Stomach (tissue), 19 donors: ENCODE measurements at regions of chr2 and their contacts with region 1.

Region 1: GRCh38 chr2:199488772-199489400 is 31.1 kb upstream of the SATB2 start:
- DNase-seq: peak; percentile 57 to 71
- H3K4me3 ChIP-seq: no peak overlapping the region
- H3K27ac ChIP-seq: no peak overlapping the region
- H3K4me1 ChIP-seq: no peaks in the 10 kb centered on the region
- H3K27me3 ChIP-seq: peaks cover 0 to 23% (median 11%) of the 10 kb centered on the region in 3 donors
- CTCF ChIP-seq: peak in 5 of 7 experiments; percentile 4 to 50 (median 47)
- EP300 ChIP-seq: no peak
- POLR2A ChIP-seq: no peak

Region 2: DNA sequence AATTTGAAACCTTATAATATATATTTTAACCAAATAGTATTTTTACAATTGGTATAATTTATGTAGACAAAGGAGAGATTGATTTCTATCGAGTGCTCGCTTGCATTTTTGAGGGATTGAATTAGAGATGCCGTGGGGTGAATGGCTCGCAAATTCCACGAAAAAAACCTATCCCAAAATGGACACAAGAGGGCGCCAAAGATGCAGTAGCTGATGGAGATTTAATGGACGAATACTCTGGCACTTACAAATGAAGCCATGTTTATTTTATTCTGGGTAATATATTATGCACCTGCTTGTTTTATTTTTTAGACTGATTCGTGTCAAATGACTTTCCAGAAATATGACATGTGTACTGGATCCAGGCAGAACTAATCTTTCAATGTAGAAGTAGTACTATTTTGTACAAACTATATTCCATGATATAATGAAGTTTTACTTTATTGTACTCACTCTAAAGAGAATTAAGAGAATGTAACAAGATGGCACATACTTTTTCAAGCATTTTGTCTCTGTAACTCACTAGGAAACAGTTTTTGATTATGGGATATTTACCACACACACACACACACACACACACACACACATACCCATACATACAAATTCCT is 1179.1 kb before region 1 on chr2:
- intact Hi-C with region 1: loop called (anchors 10 kb)
- DNase-seq: peak; percentile 40 to 78
- H3K4me3 ChIP-seq: no peak overlapping the region
- H3K27ac ChIP-seq: no peak overlapping the region
- H3K4me1 ChIP-seq: peaks cover 0 to 7% (median 0%) of the 10 kb centered on the region in 4 donors
- H3K27me3 ChIP-seq: peaks cover 0 to 22% (median 8%) of the 10 kb centered on the region in 3 donors
- CTCF ChIP-seq: peak in 4 of 7 experiments; percentile 49 to 87 (median 67)
- EP300 ChIP-seq: no peak
- POLR2A ChIP-seq: no peak

Region 3: GRCh38 chr2:199581935-199582360 is 93.1 kb after region 1 on chr2:
- intact Hi-C with region 1: no loop called
- DNase-seq: peak in 1 of 2 donors; percentile 43
- H3K4me3 ChIP-seq: peak overlapping the region; percentile 23 to 36 (median 33)
- H3K27ac ChIP-seq: no peak overlapping the region
- H3K4me1 ChIP-seq: peaks cover 0 to 13% (median 3%) of the 10 kb centered on the region in 4 donors
- H3K27me3 ChIP-seq: peaks cover 0 to 7% (median 6%) of the 10 kb centered on the region in 3 donors
- CTCF ChIP-seq: no peak
- EP300 ChIP-seq: no peak
- POLR2A ChIP-seq: no peak